ENCODE measurements at regions of chr10 and their contacts with region 1.

Region 1: GRCh38 chr10:31928549-31929260 is at the start of gene ARHGAP12:
- DNase-seq: peak; percentile 87
- ATAC-seq: peak; percentile 52
- H3K4me3 Mint-ChIP-seq: peak within 1 kb of the TSS; percentile 84
- H3K27ac Mint-ChIP-seq: peak within 1 kb of the TSS; percentile 74
- H3K4me1 Mint-ChIP-seq: peaks cover 42% of the 10 kb centered on the region
- H3K27me3 Mint-ChIP-seq: no peaks in the 10 kb centered on the region
- total RNA-seq, gene ARHGAP12: 5.5 to 6.4 TPM

Region 2: GRCh38 chr10:30701451-30702173 is 1227.1 kb before region 1 on chr10:
- CTCF ChIA-PET with region 1: no interaction called
- POLR2A ChIA-PET with region 1: no interaction called
- intact Hi-C with region 1: loop called (anchors 5 to 10 kb)
- DNase-seq: peak; percentile 93
- ATAC-seq: peak; percentile 73
- H3K4me3 Mint-ChIP-seq: peak overlapping the region; percentile 86
- H3K27ac Mint-ChIP-seq: peak overlapping the region; percentile 90
- H3K4me1 Mint-ChIP-seq: peaks cover 87% of the 10 kb centered on the region
- H3K27me3 Mint-ChIP-seq: no peaks in the 10 kb centered on the region

Region 3: GRCh38 chr10:30902621-30903396 is 1025.9 kb before region 1 on chr10:
- CTCF ChIA-PET with region 1: no interaction called
- POLR2A ChIA-PET with region 1: no interaction called
- intact Hi-C with region 1: no loop called
- DNase-seq: no peak
- ATAC-seq: no peak
- H3K4me3 Mint-ChIP-seq: no peak overlapping the region
- H3K27ac Mint-ChIP-seq: no peak overlapping the region
- H3K4me1 Mint-ChIP-seq: no peaks in the 10 kb centered on the region
- H3K27me3 Mint-ChIP-seq: no peaks in the 10 kb centered on the region

Region 4: DNA sequence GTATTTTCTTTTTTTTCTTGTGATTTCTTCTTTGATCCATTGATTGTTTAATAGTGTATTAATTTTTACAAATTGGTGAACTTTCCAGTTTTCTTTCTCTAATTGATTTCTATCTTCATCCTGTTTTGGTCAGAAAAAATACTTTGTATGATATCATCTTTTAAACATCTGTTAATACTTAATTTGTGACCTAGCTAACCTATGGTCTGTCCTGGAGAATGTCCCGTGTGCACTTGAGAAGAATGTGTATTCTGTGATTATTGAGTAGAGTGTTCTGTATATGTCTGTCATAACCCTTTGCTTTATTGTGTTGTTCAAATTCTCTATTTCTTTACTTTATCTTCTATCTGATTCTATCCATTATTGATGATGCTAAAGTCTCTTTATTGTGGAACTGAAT is 675.5 kb before region 1 on chr10:
- CTCF ChIA-PET with region 1: no interaction called
- POLR2A ChIA-PET with region 1: no interaction called
- intact Hi-C with region 1: no loop called
- DNase-seq: no peak
- ATAC-seq: no peak
- H3K4me3 Mint-ChIP-seq: no peak overlapping the region
- H3K27ac Mint-ChIP-seq: no peak overlapping the region
- H3K4me1 Mint-ChIP-seq: no peaks in the 10 kb centered on the region
- H3K27me3 Mint-ChIP-seq: peaks cover 1% of the 10 kb centered on the region

Region 5: DNA sequence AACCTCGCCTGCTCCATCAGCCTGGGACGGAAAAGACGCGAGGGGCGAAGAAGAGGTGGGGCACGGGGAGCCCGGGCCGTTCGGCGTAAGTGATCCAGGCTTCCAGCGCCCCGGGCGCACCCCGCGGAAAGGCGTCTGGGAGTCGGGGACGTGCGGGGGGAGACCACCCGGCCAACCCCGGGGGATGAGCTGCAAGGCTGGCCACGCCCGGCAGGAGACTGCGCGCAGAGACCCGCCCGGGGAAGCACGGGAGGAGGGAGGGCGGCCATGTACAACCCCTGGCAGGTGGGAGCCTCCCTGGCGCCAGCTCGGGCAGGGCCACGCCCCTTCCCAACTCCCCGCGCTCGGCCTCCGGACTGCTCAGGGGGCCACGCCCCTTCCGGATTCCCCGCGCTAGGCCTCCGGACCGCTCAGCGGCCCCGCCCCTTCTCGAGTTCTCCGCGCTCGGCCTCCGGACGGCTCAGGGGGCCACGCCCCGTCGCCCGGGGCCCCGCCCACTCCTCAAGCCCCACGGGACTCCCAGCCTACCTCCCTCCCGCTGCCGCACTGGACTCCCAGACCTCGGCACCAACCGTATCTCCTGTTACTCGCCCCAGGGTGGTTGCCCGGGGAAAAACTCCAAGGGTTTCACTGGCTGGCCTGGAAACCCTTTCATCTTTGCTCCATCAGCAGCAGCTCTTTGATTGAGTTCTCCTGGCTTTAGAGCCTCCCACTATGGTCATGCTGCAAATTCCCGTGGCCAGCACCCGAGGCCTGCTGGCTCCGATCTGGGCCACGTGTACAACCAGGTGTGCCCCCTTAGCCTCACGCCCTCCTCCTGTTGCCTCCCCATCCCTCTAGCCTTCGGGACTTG is 325.2 kb before region 1 on chr10:
- CTCF ChIA-PET with region 1: no interaction called
- POLR2A ChIA-PET with region 1: no interaction called
- intact Hi-C with region 1: loop called in 1 of 2 experiments (anchors 5 kb)
- DNase-seq: peak; percentile 94
- ATAC-seq: peak; percentile 92
- H3K4me3 Mint-ChIP-seq: peak overlapping the region; percentile 76
- H3K27ac Mint-ChIP-seq: peak overlapping the region; percentile 17
- H3K4me1 Mint-ChIP-seq: peaks cover 33% of the 10 kb centered on the region
- H3K27me3 Mint-ChIP-seq: peaks cover 2% of the 10 kb centered on the region

Region 6: GRCh38 chr10:31864834-31865518 is 63.7 kb before region 1 on chr10:
- CTCF ChIA-PET with region 1: interaction called, 22 read pairs
- POLR2A ChIA-PET with region 1: no interaction called
- intact Hi-C with region 1: loop called (anchors 2 to 5 kb)
- DNase-seq: no peak
- ATAC-seq: no peak
- H3K4me3 Mint-ChIP-seq: no peak overlapping the region
- H3K27ac Mint-ChIP-seq: peak overlapping the region; percentile 3
- H3K4me1 Mint-ChIP-seq: peaks cover 30% of the 10 kb centered on the region
- H3K27me3 Mint-ChIP-seq: no peaks in the 10 kb centered on the region

Region 7: DNA sequence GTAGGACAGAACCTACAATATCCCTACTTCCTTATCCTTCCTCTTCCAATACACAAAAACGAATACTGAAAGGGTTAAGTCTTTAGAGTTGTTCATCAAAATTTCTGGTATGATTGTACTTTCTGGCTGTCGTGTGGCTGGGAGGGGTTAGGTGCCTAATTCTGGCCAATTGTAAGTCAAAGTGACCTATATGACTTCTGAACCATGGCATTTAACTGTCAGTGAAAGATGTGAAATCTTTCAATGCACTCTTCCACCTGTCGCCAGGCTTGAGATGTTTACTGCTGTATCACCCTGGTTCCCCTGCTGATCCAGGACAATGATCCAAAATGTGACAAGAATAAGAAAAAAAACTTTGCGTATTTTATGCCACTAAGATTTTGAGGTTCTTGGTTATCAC is 397.4 kb after region 1 on chr10:
- CTCF ChIA-PET with region 1: no interaction called
- POLR2A ChIA-PET with region 1: no interaction called
- intact Hi-C with region 1: loop called in 1 of 2 experiments (anchors 5 kb)
- DNase-seq: peak; percentile 30
- ATAC-seq: peak; percentile 50
- H3K4me3 Mint-ChIP-seq: no peak overlapping the region
- H3K27ac Mint-ChIP-seq: peak overlapping the region; percentile 40
- H3K4me1 Mint-ChIP-seq: peaks cover 85% of the 10 kb centered on the region
- H3K27me3 Mint-ChIP-seq: no peaks in the 10 kb centered on the region

Region 8: GRCh38 chr10:33134011-33134751 is 1205.5 kb after region 1 on chr10:
- CTCF ChIA-PET with region 1: no interaction called
- POLR2A ChIA-PET with region 1: no interaction called
- intact Hi-C with region 1: loop called (anchors 5 to 10 kb)
- DNase-seq: peak; percentile 89
- ATAC-seq: peak; percentile 77
- H3K4me3 Mint-ChIP-seq: peak overlapping the region; percentile 25
- H3K27ac Mint-ChIP-seq: peak overlapping the region; percentile 83
- H3K4me1 Mint-ChIP-seq: peaks cover 83% of the 10 kb centered on the region
- H3K27me3 Mint-ChIP-seq: no peaks in the 10 kb centered on the region